ENCODE measurements at regions of chr11 and their contacts with region 1.

Region 1: DNA sequence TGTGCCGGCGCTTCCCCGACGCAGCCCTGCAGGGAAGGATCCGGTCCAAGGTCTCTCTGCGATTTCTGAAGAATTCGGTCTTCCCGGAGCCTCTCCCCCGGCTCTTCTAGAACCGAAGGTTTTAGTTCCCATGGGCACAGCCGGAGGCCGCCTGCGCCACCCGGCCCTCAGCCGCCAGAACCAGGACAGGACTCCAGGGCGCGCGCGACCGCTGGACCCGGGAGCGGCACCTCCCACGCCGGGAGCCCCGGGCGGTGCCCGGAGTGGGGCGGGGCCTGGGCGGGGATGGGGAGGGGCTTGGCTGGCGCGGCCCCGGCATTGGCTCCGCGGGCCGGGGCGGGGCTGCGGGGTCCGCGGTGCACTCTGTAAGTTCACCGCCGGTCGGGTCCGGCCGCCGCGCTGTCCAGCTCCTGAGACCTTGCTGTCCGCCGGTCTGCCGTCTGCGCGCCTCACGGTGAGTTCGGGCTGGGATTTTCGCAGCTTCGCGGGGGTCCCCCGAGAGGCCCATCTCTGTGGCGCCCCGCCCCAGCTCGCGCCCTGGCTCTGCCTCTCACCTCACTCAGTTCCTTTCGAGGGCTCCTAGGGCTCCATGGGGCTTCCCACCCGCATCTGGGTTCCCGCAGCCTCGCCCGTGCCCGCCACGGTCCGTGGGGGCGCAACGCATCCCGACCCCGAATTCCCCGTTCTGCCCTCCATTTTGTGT is at the start of gene CDC42EP2:
- DNase-seq: peak; percentile 94
- CTCF ChIP-seq: no peak

Region 2: GRCh38 chr11:65159012-65159411 is 155.6 kb before region 1 on chr11:
- CTCF ChIA-PET with region 1: no interaction called
- POLR2A ChIA-PET with region 1: no interaction called
- DNase-seq: peak; percentile 55
- CTCF ChIP-seq: no peak

Region 3: GRCh38 chr11:65204646-65205601 is 109.7 kb before region 1 on chr11:
- CTCF ChIA-PET with region 1: interaction called, 24 read pairs
- POLR2A ChIA-PET with region 1: no interaction called
- DNase-seq: peak; percentile 82
- CTCF ChIP-seq: peak; percentile 87

Region 4: GRCh38 chr11:65251476-65251875 is 63.2 kb before region 1 on chr11:
- CTCF ChIA-PET with region 1: interaction called, 14 read pairs
- POLR2A ChIA-PET with region 1: no interaction called
- DNase-seq: no peak
- CTCF ChIP-seq: no peak

Region 5: GRCh38 chr11:65274735-65275682 is 39.6 kb before region 1 on chr11:
- CTCF ChIA-PET with region 1: interaction called, 686 read pairs
- POLR2A ChIA-PET with region 1: interaction called, 10 read pairs
- DNase-seq: peak; percentile 55
- CTCF ChIP-seq: peak; percentile 84

Region 6: GRCh38 chr11:65354265-65355012 is 39.8 kb after region 1 on chr11 and contains the start of gene TIGD3:
- CTCF ChIA-PET with region 1: interaction called, 13 read pairs
- POLR2A ChIA-PET with region 1: interaction called, 5 read pairs
- DNase-seq: peak; percentile 100
- CTCF ChIP-seq: no peak

Region 7: DNA sequence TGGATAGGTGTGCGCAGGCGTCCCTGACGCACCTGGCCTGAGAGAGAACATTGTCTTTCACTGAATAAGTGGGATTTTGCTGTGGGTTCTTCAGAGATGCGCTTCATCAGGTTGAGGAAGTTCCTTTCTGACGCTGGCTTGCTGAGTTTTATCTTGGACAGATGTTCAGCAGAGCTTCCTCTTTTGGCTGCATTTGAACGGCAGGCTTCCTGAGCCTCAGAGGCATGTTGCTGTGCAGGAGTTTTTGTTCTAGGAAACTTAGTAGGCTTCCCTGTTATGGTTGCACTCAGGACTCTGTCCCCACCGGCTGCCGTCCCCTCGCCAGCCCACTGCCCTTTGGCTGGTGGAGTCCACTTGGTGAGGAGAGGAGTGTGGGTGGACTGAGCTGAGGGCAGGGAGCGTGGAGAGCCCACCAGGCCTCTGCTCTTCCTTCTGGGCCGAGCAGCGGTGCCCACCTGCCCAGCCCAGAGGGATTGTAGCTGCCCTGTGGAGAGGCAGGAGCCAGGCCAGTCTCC is 89.0 kb after region 1 on chr11:
- CTCF ChIA-PET with region 1: no interaction called
- POLR2A ChIA-PET with region 1: no interaction called
- DNase-seq: peak; percentile 62
- CTCF ChIP-seq: no peak

Region 8: DNA sequence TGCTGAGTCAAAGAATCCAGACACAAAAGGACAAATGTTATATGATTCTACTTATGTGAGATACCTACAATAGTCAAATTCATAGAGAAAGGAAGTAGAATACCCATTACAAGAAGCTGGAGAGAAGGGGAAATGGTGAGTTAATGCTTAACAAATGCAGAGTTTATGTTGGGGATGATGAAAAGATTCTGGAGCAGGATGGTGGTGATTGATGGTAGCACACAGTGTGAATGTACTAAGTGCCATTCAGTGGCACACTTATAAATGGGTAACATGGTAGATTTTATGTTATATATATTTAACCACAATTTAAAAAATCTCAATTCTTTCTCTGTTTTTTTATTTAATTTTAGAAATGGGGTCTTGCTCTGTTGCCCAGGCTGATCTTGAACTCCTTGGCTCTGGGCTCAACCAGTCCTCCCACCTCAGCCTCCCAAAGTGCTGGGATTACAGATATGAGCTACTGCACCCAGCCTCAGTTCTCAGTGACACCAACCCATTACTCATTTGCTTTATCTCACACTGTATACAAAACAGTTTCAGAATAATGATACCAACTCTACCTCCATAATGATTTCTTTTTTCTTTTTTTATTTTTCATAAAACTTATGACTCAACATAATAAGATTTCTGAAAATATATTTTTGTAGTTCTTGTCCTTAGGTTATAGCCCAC is 357.7 kb after region 1 on chr11:
- CTCF ChIA-PET with region 1: no interaction called
- POLR2A ChIA-PET with region 1: no interaction called
- DNase-seq: no peak
- CTCF ChIP-seq: no peak